Heart left ventricle (tissue), 16 donors: ENCODE measurements at regions of chr15 and their contacts with region 1.

Region 1: GRCh38 chr15:84818261-84819131 is 1.3 kb downstream of the ALPK3 start:
- DNase-seq: peak in 4 of 5 donors; percentile 62 to 77 (median 66)
- ATAC-seq: peak; percentile 3 to 46 (median 24)
- H3K4me3 ChIP-seq: peak overlapping the region; percentile 35 to 93 (median 72)
- H3K27ac ChIP-seq: peak overlapping the region; percentile 93 to 99 (median 96)
- H3K4me1 ChIP-seq: peaks cover 11 to 78% (median 68%) of the 10 kb centered on the region in 12 donors
- H3K27me3 ChIP-seq: no peaks in the 10 kb centered on the region
- CTCF ChIP-seq: peak in 3 of 12 donors; percentile 28 to 35 (median 29)
- POLR2A ChIP-seq: no peak

Region 2: GRCh38 chr15:84702961-84703482 is 115.5 kb before region 1 on chr15:
- intact Hi-C with region 1: loop called in 1 of 10 experiments (anchors 5 kb)
- DNase-seq: peak in 4 of 5 donors; percentile 69 to 73 (median 71)
- ATAC-seq: peak; percentile 76 to 94 (median 91)
- H3K4me3 ChIP-seq: no peak overlapping the region
- H3K27ac ChIP-seq: peak overlapping the region in 7 of 12 donors; percentile 28 to 50 (median 38)
- H3K4me1 ChIP-seq: peaks cover 3 to 60% (median 17%) of the 10 kb centered on the region in 12 donors
- H3K27me3 ChIP-seq: no peaks in the 10 kb centered on the region
- CTCF ChIP-seq: no peak
- POLR2A ChIP-seq: no peak

Region 3: DNA sequence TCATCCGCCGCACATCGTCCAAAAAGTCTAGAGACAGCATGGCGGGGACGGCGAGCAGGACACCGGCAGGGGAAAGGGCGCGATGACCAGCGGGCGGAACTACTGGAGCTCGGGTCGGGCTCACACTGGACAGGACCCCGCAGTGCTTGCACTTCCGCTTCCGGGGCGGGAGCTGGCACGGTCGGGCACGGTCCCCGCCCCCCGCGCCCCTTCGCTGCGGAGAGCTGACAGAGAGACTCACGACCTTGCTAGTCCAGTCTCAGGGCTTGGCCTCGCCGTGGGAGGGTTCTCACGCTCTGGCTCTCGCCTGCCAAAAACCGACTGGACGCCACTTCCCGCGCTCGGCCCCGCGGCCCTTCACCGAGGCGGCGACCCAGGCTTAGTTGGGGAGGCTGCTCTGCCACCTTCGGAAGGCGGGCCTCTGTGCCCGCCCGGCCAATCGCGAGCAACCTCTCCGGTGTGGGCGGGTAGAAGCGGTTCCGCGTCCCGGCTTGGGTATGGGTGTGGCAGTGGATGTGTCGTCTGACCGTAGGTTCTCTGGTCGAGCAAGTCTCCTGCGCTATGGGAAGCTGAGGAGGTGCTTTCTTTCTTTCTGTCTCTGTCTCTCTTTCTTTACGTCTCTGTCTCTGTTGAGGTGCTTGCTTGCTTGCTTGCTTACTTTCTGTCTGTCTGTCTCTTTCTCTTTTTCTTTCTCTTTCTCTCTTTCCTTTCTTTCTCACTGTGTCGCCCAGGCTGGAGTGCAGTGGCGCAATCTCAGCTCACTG is 102.3 kb before region 1 on chr15 and contains the start of gene SEC11A:
- intact Hi-C with region 1: loop called in 2 of 10 experiments (anchors 10 kb)
- DNase-seq: peak; percentile 95 to 98 (median 96)
- ATAC-seq: peak; percentile 98 to 99 (median 98)
- H3K4me3 ChIP-seq: peak within 1 kb of the TSS; percentile 58 to 98 (median 82)
- H3K27ac ChIP-seq: peak within 1 kb of the TSS; percentile 86 to 99 (median 94)
- H3K4me1 ChIP-seq: peaks cover 8 to 52% (median 25%) of the 10 kb centered on the region in 12 donors
- H3K27me3 ChIP-seq: no peaks in the 10 kb centered on the region
- CTCF ChIP-seq: no peak
- POLR2A ChIP-seq: peak in 1 of 2 donors; percentile 76
- total RNA-seq, gene SEC11A: 55.7 to 95.7 (median 73.0) TPM